ENCODE measurements at regions of chr10 and their contacts with region 1.

Region 1: DNA sequence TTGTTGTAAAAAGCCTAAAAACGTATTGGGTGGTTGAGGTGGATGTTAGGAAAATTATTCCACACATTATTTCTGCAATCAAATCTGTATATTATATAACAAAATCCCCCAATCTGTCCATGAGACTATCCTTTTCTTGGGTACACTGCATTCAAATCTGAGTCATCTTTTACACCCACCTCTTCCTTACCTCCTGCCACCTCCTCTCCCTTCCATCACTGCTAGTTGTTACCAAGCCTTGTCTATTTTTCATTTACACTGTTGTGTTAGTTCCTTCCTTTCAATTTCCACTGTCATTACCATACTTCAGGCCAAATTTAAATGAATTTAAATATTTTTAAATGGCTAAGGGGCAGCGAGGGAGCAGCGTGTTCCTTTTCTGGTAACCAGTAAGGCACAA is 83.3 kb downstream of the ITGA8 start:
- DNase-seq: no peak
- ATAC-seq: no peak
- H3K4me3 ChIP-seq: no peak overlapping the region
- H3K27ac ChIP-seq: no peak overlapping the region
- H3K4me1 ChIP-seq: peaks cover 0 to 10% (median 0%) of the 10 kb centered on the region in 12 donors
- H3K27me3 ChIP-seq: no peaks in the 10 kb centered on the region
- CTCF ChIP-seq: no peak
- POLR2A ChIP-seq: no peak

Region 2: DNA sequence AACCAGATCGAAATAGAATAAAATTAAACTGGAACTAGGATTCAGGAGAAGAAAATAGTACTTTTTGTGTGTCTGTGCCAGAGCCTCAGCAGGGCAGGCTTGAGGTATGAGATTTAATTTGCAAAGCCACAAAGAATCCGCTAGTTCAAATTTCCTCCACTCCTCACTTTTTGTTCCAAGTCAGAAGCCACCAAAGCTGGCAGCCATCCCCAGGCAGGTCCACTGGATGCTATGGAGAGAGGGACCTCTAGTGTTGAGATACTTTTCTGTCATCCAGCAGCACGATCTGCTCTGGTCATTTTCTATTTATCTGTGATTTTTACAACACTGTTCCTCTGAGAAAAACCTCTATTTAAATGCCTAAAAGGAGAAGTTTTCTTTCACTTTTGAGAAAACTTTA is 1157.8 kb before region 1 on chr10:
- intact Hi-C with region 1: no loop called
- DNase-seq: peak; percentile 60 to 76 (median 73)
- ATAC-seq: peak in 3 of 4 donors; percentile 72 to 82 (median 81)
- H3K4me3 ChIP-seq: no peak overlapping the region
- H3K27ac ChIP-seq: no peak overlapping the region
- H3K4me1 ChIP-seq: peaks cover 0 to 14% (median 0%) of the 10 kb centered on the region in 12 donors
- H3K27me3 ChIP-seq: peaks cover 0 to 4% (median 0%) of the 10 kb centered on the region in 9 donors
- CTCF ChIP-seq: peak; percentile 39 to 79 (median 65)
- POLR2A ChIP-seq: no peak

Region 3: GRCh38 chr10:15670880-15671279 is 34.4 kb after region 1 on chr10:
- intact Hi-C with region 1: no loop called
- DNase-seq: no peak
- ATAC-seq: no peak
- H3K4me3 ChIP-seq: no peak overlapping the region
- H3K27ac ChIP-seq: no peak overlapping the region
- H3K4me1 ChIP-seq: no peaks in the 10 kb centered on the region
- H3K27me3 ChIP-seq: no peaks in the 10 kb centered on the region
- CTCF ChIP-seq: no peak
- POLR2A ChIP-seq: no peak

Region 4: DNA sequence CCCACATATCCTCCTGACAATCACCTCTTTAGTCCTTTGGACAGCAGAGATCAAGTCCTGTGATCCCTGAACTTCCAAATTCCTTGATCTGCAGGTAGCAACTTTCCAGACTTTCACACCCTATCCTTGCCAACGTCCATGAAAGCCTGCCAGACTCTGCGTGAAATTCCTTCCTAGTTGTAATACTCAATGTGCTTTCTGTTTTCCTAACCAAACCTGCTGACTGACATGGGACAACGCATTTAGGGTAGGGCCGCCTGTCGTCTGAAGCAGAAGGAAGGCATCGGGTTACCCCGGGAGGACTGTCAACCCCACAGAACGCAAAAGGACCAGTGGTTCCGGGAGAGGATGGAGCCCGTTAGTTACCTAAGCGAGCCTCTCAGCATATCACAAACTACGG is 59.4 kb after region 1 on chr10:
- intact Hi-C with region 1: loop called in 1 of 10 experiments (anchors 5 kb)
- DNase-seq: no peak
- ATAC-seq: no peak
- H3K4me3 ChIP-seq: no peak overlapping the region
- H3K27ac ChIP-seq: no peak overlapping the region
- H3K4me1 ChIP-seq: no peaks in the 10 kb centered on the region
- H3K27me3 ChIP-seq: peaks cover 0 to 2% (median 0%) of the 10 kb centered on the region in 9 donors
- CTCF ChIP-seq: no peak
- POLR2A ChIP-seq: no peak

Measured in heart left ventricle (tissue), 16 donors.